ENCODE measurements at regions of chr12 and their contacts with region 1.

Region 1: DNA sequence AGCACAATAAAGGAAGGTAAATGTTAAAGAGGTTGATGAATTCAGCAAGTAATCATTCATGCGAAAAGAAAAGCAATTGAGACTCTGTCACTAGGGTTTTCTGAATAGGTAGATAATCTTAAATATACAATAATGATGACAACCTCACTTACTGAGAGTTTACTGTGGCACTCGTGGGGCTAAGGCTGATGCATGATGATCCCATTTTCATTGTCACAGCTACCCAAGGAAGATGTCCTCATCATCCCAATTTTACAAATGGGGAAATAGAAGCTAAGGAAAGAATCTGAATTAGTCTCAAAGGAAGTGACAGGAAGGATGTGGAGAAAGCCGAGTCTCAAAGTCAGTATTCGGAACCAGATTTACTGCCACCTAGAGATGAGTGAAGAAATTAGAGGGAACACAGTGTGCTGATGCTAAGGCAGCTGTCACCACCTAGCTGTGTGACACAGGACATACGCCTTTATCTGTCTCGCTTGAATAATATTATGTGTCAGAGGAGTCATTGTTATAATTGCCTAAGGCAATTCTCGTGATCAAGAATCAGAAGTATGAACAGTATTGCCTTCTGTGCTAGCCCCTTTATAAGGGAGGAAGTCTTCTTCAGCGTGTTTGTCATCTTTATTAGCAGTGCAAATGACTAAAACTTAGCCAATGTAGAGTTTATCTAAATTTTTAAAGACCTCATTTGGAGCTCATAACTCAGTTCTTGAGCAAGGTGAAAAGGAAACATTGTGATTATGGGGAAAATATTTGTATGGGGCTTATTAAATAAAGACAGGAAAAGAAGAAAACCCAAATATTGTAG is 63.2 kb downstream of the ERGIC2 start:
- DNase-seq: peak; percentile 18 to 65
- ATAC-seq: peak; percentile 94 to 99 (median 96)
- H3K4me3 ChIP-seq: peak overlapping the region in 6 of 10 donors; percentile 23 to 41 (median 30)
- H3K27ac ChIP-seq: peak overlapping the region in 9 of 10 donors; percentile 7 to 80 (median 69)
- H3K4me1 ChIP-seq: peaks cover 0 to 39% (median 11%) of the 10 kb centered on the region in 9 donors
- H3K27me3 ChIP-seq: no peaks in the 10 kb centered on the region
- CTCF ChIP-seq: peak; percentile 48 to 96 (median 85)

Region 2: DNA sequence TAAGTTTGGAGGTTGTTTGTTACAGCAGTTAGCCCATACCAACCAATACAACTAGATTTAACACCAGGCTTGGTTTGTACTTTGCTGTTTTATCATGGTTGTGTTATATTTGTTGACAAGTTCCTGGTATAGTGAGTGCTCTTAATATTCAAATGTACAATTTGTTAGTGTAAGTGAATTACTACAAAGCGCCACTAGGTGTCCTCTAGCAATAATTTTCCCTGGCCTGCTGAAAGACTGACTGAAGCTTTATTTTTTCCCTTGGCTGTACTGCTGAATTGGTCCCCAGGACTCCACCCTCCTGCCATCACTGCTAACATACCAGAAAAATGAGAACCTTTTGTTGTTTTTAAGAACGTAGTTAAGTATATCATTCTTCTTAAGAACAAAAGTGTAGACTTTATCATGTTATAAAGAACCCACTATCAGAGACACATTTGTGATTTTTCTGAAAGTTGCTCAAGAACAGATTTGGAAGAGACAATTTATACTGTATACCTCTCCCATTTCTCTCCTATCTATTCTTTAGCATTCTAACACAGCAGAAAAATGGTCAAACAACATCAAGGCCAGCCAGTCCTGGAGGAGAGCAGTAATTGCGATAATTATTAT is 244.0 kb before region 1 on chr12:
- intact Hi-C with region 1: loop called (anchors 2 to 10 kb)
- DNase-seq: peak in 1 of 2 donors; percentile 25
- ATAC-seq: peak; percentile 66 to 80 (median 71)
- H3K4me3 ChIP-seq: no peak overlapping the region
- H3K27ac ChIP-seq: no peak overlapping the region
- H3K4me1 ChIP-seq: no peaks in the 10 kb centered on the region
- H3K27me3 ChIP-seq: no peaks in the 10 kb centered on the region
- CTCF ChIP-seq: peak; percentile 55 to 80 (median 73)

Region 3: GRCh38 chr12:29088611-29089219 is 229.0 kb before region 1 on chr12:
- intact Hi-C with region 1: loop called in 5 of 10 experiments (anchors 5 kb)
- DNase-seq: no peak
- ATAC-seq: no peak
- H3K4me3 ChIP-seq: no peak overlapping the region
- H3K27ac ChIP-seq: no peak overlapping the region
- H3K4me1 ChIP-seq: no peaks in the 10 kb centered on the region
- H3K27me3 ChIP-seq: no peaks in the 10 kb centered on the region
- CTCF ChIP-seq: peak in 7 of 9 donors; percentile 19 to 52 (median 45)

Region 4: GRCh38 chr12:29148911-29149690 is 168.7 kb before region 1 on chr12 and contains the start of gene FAR2:
- intact Hi-C with region 1: loop called in 1 of 10 experiments (anchors 5 kb)
- DNase-seq: peak; percentile 49 to 62
- ATAC-seq: peak; percentile 79 to 89 (median 84)
- H3K4me3 ChIP-seq: peak within 1 kb of the TSS; percentile 42 to 86 (median 72)
- H3K27ac ChIP-seq: peak within 1 kb of the TSS; percentile 57 to 92 (median 80)
- H3K4me1 ChIP-seq: peaks cover 0 to 55% (median 32%) of the 10 kb centered on the region in 9 donors
- H3K27me3 ChIP-seq: peaks cover 0 to 19% (median 0%) of the 10 kb centered on the region in 7 donors
- CTCF ChIP-seq: no peak
- total RNA-seq, gene FAR2: 1.4 to 6.7 (median 2.7) TPM

Region 5: DNA sequence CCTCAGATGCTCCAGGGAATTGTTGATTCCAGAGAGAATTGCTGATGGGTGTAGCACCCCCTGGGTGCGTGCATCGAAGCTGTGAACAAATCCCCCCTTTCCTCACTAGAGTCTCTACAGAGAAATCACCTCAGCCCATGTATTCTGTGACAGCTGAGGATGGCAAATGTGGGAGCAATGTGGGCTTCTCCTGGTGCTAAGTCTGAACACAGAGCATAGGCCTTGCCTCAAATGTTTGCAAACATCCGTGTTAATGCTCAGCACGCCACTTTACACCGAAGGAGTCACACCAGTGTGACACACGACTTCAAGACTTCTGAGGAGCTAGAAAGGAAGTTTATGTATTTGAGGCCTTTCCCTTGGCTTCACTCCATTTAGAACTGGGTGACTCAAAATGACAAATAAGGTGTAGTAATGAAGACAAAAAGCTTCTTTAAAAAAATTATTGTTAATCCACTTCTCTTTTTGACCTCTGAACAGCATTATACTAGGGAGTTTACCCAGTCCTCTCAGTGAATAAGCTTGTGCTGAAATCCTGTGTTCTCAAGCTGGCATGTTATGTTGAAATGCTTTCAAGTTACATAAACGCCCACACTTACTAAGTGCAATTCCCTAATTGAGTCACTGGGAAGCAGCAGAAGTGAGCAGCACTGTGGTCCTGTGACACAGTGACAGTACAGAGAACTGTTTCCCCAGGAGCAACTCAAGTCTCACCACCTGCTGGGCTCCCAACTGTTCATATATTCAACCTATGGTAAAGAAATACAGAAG is 75.8 kb before region 1 on chr12:
- intact Hi-C with region 1: loop called in 1 of 10 experiments (anchors 10 kb)
- DNase-seq: peak in 1 of 2 donors; percentile 32
- ATAC-seq: peak; percentile 78 to 96 (median 92)
- H3K4me3 ChIP-seq: no peak overlapping the region
- H3K27ac ChIP-seq: peak overlapping the region in 9 of 10 donors; percentile 10 to 59 (median 51)
- H3K4me1 ChIP-seq: peaks cover 4 to 29% (median 20%) of the 10 kb centered on the region in 9 donors
- H3K27me3 ChIP-seq: no peaks in the 10 kb centered on the region
- CTCF ChIP-seq: peak in 6 of 9 donors; percentile 11 to 46 (median 33)

Measured in heart right ventricle (tissue), 16 donors.